HEK293 (cell line): ENCODE measurements at regions of chr6 and their contacts with region 1.

Region 1: GRCh38 chr6:91094806-91095475 is 508.1 kb upstream of the MAP3K7 start:
- H3K4me3 ChIP-seq: no peak overlapping the region
- H3K27ac ChIP-seq: no peak overlapping the region
- H3K4me1 ChIP-seq: no peaks in the 10 kb centered on the region
- CTCF ChIP-seq: no peak

Region 2: GRCh38 chr6:91081452-91082067 is 13.4 kb before region 1 on chr6:
- CTCF ChIA-PET with region 1: interaction called, 22 read pairs
- POLR2A ChIA-PET with region 1: no interaction called
- H3K4me3 ChIP-seq: no peak overlapping the region
- H3K27ac ChIP-seq: no peak overlapping the region
- H3K4me1 ChIP-seq: no peaks in the 10 kb centered on the region
- CTCF ChIP-seq: peak; percentile 47

Region 3: DNA sequence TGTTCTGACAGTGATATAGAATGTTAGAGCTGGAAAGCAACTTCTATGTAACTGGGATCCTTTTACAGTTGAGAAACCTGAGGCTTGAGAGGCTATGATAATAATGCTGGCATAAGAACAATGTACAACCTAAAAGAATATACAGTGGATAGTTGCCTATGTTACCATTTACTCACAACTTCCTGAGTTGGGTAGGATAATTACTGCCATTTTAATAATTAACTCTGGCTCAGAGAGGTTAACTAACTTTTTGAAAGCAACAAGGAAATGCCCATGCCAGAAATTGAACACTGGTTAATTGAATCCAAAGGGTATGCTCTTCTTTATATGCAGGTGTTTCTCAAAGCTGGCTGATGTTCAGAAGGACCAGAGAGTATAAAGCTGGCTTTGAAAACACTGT is 22.6 kb after region 1 on chr6:
- CTCF ChIA-PET with region 1: no interaction called
- POLR2A ChIA-PET with region 1: no interaction called
- H3K4me3 ChIP-seq: no peak overlapping the region
- H3K27ac ChIP-seq: no peak overlapping the region
- H3K4me1 ChIP-seq: no peaks in the 10 kb centered on the region
- CTCF ChIP-seq: no peak